Esophagus muscularis mucosa (tissue), 4 donors: ENCODE measurements at regions of chr18 and their contacts with region 1.

Region 1: GRCh38 chr18:44826418-44827259 is 146.0 kb downstream of the SETBP1 start:
- DNase-seq: no peak
- H3K4me3 ChIP-seq: no peak overlapping the region
- H3K27ac ChIP-seq: peak overlapping the region; percentile 79 to 88 (median 82)
- H3K4me1 ChIP-seq: peaks cover 40 to 70% (median 68%) of the 10 kb centered on the region in 4 donors
- H3K27me3 ChIP-seq: no peaks in the 10 kb centered on the region
- CTCF ChIP-seq: no peak
- EP300 ChIP-seq: no peak
- POLR2A ChIP-seq: no peak

Region 2: GRCh38 chr18:43961722-43962121 is 864.9 kb before region 1 on chr18:
- intact Hi-C with region 1: loop called (anchors 5 kb)
- DNase-seq: no peak
- H3K4me3 ChIP-seq: no peak overlapping the region
- H3K27ac ChIP-seq: no peak overlapping the region
- H3K4me1 ChIP-seq: no peaks in the 10 kb centered on the region
- H3K27me3 ChIP-seq: no peaks in the 10 kb centered on the region
- CTCF ChIP-seq: no peak
- EP300 ChIP-seq: no peak
- POLR2A ChIP-seq: no peak

Region 3: GRCh38 chr18:45106331-45106774 is 279.7 kb after region 1 on chr18:
- intact Hi-C with region 1: no loop called
- DNase-seq: no peak
- H3K4me3 ChIP-seq: no peak overlapping the region
- H3K27ac ChIP-seq: no peak overlapping the region
- H3K4me1 ChIP-seq: peaks cover 0 to 19% (median 7%) of the 10 kb centered on the region in 4 donors
- H3K27me3 ChIP-seq: no peaks in the 10 kb centered on the region
- CTCF ChIP-seq: no peak
- EP300 ChIP-seq: no peak
- POLR2A ChIP-seq: no peak